ENCODE measurements at regions of chr7 and their contacts with region 1.

Region 1: DNA sequence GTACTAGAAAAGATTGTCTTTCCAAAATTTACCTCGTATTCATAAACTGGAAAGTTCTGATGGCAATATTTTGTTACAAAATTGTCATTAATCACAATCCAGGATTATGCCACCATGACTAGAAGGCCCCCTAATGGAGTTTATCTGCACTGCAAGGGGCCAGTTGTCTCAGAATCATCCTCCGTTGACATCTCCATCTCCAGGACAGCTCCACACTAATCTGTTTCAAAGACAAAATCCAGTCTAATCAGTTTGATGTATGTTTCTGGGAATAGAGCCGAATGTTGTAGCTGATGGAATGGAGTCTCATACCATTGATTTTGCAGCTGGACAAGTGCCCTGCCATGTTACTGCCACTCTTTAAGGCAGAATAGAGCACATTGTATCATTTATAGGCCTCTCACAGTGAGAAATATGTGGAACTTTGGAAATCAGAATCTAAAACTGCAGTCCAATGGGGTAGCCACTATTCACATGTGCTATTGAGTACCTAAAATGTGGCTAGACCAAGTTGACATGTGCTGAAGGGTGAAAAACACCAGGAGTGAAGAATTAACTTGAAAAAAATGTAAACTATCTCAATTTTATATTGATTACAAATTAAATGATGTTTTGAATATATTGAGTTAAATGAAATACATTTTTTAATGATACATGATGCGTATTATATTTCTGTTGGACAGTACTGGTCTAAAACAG is 38.3 kb upstream of the TOMM7 start:
- DNase-seq: peak; percentile 45
- ATAC-seq: peak; percentile 44
- H3K4me3 Mint-ChIP-seq: no peak overlapping the region
- H3K27ac Mint-ChIP-seq: peak overlapping the region; percentile 51
- H3K4me1 Mint-ChIP-seq: peaks cover 51% of the 10 kb centered on the region
- H3K27me3 Mint-ChIP-seq: no peaks in the 10 kb centered on the region

Region 2: GRCh38 chr7:22833113-22833855 is 27.6 kb before region 1 on chr7:
- CTCF ChIA-PET with region 1: no interaction called
- POLR2A ChIA-PET with region 1: no interaction called
- intact Hi-C with region 1: no loop called
- DNase-seq: no peak
- ATAC-seq: no peak
- H3K4me3 Mint-ChIP-seq: no peak overlapping the region
- H3K27ac Mint-ChIP-seq: no peak overlapping the region
- H3K4me1 Mint-ChIP-seq: no peaks in the 10 kb centered on the region
- H3K27me3 Mint-ChIP-seq: peaks cover 3% of the 10 kb centered on the region

Region 3: DNA sequence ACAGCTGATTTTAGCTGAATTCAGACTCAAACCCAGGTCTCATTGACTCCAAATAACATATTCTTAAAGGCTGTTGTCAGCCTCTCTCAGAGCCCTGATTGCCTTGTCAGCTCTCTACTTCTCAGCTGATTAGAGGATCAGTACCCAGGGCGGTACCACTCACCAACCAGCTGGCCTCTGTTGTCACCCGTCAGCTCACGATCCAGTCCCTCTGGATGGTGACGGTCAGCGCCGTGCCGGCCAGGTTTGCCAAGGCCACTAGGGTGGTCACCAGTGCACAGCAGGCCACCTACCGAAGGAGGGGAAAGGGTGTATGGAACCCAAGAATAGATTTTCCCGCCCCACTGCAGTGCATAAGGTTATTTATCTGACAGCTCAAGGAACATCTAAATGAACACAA is 14.0 kb after region 1 on chr7:
- CTCF ChIA-PET with region 1: interaction called, 10 read pairs
- POLR2A ChIA-PET with region 1: no interaction called
- intact Hi-C with region 1: no loop called
- DNase-seq: no peak
- ATAC-seq: no peak
- H3K4me3 Mint-ChIP-seq: no peak overlapping the region
- H3K27ac Mint-ChIP-seq: no peak overlapping the region
- H3K4me1 Mint-ChIP-seq: no peaks in the 10 kb centered on the region
- H3K27me3 Mint-ChIP-seq: no peaks in the 10 kb centered on the region